ENCODE measurements at regions of chr4 and their contacts with region 1.

Region 1: DNA sequence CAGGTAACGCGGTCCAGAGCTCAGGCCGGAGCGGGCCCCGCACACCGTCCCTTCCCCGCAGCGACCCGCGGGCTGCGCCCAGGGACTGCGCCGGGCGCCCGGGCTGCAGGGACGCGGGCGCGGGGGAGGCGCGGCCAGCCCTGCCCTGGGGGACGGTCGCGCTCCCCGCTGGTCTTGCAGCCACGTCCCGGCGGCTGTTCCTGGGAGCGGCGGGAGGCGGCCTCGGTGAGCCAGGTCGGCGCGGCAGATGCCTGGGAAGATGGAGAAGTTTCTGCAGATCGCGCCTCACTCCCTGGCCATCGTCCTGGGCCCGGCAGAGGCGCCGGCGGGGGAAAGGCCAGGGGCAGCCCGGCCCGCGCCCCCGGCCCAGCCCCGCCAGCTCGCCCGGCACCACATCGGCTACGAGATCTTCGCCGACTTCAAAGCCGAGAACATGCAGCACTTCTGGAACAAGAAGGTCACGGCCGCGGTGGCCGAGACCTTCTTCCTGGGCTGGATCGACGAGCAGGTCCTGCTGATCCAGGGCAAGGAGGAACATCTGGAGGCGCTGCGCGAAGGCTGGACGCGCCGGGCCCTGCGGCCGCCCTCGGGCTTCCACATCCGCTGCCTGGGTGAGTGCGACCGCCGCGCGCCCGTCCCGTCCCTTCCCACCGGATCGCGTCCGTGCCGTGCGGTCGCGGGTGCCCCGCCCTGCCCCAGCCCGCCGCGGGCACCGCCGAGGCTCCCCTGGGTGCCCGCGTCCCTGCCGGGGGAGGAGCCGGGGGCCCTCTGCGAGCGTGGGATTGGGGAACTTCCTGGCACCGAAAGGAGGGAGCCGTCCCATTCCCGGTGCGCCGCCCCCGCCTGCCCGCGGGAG is 107.4 kb upstream of the STOX2 start:
- DNase-seq: peak; percentile 80

Region 2: DNA sequence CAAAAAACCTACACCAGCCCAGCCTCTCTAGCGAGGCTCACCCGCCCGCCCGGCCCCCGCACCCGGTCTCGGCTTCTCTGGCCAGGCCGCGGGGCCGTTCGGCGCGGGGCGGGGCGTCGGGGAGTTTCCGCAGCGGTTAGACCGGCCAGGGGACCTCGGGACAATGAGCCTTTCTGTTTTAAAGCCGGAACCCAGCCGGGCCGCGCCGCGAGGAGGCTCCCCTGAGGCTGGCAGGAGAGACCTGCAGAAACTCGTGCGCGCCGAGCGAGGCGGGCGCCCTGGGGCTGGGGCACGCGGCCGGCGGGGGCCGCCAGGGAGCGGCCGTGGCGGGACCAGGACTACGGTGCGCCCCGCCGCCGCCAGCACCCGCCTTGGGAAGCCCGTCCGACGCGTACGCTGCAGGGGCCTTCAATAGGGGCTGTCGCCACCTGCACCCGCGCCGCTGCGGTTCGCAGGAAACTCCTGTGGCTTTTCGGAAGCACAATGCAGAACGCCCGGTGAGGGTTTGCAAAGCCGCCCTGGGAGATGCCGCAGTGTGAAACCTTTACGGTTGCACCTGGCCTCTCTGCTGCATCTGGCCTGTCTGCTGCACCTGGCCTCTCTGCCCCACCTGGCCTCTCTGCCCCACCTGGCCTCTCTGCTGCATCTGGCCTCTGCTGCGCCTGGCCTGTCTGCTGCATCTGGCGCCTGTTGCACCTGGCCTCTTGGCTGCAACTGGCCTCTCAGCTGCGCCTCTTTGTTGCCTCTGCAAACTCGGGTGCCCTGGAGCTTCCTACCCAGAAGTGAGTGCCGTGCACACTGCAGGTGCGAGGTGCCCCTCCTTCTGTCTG is 74.7 kb before region 1 on chr4:
- intact Hi-C with region 1: loop called (anchors 5 kb)
- DNase-seq: peak; percentile 84